GM10248 (cell line): ENCODE measurements at regions of chr9 and their contacts with region 1.

Region 1: GRCh38 chr9:133532937-133533668 is 1.4 kb upstream of the ADAMTSL2 start:
- DNase-seq: peak; percentile 79
- CTCF ChIP-seq: peak; percentile 72

Region 2: DNA sequence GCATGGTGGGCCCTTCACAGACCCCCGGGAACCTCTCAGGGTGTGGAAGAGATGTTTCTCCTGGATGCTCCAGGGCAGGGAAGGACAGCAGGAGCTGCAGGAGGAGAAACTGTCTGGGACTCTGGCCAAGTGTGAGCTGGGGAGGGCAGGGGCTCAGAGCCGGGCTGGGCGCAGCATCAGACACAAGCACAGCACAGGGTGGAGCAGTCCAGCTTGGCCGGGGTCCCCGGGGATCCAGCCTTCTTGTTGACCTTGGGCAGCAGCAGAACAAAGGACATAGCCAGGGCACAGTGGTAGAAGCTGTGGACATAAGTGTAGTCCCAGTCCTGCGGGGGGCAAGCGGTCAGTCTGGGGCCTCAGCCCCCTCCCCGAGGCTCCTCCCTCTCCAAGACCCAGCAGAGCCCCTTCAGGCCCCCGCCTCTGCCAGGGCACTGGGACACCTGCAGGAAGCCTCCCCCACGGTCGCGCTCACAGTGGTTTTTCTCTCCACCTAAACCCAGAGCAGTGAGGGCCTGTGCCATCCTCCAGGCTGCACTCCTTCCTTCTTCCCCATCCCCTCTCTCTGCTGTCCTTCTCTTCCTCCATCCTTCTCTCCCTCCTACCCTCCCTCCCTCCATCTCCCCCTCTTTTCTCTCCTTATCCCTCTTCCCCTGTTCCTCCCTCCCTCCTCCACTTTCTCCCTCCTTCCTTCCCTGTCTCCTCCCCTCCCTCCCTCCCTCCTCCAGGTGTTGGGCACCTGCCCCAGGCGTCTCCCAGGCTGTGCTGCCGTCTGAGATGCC is 18.5 kb before region 1 on chr9:
- CTCF ChIA-PET with region 1: no interaction called
- POLR2A ChIA-PET with region 1: no interaction called
- DNase-seq: no peak
- CTCF ChIP-seq: no peak

Region 3: GRCh38 chr9:133726401-133727276 is 193.5 kb after region 1 on chr9:
- CTCF ChIA-PET with region 1: interaction called, 34 read pairs
- POLR2A ChIA-PET with region 1: no interaction called
- DNase-seq: peak; percentile 66
- CTCF ChIP-seq: peak; percentile 49